H1 (cell line): ENCODE measurements at regions of chr9 and their contacts with region 1.

Region 1: GRCh38 chr9:92964998-92965758 is 17.9 kb downstream of the FGD3 start:
- DNase-seq: no peak
- H3K4me3 ChIP-seq: no peak overlapping the region
- H3K27ac ChIP-seq: no peak overlapping the region
- H3K4me1 ChIP-seq: peaks cover 5 to 25% (median 15%) of the 10 kb centered on the region in 4 experiments
- H3K27me3 ChIP-seq: no peaks in the 10 kb centered on the region
- CTCF ChIP-seq: no peak
- EP300 ChIP-seq: no peak
- POLR2A ChIP-seq: no peak
- RAD21 ChIP-seq: no peak

Region 2: GRCh38 chr9:92934321-92934720 is 30.9 kb before region 1 on chr9:
- CTCF ChIA-PET with region 1: no interaction called
- POLR2A ChIA-PET with region 1: no interaction called
- DNase-seq: no peak
- H3K4me3 ChIP-seq: no peak overlapping the region
- H3K27ac ChIP-seq: no peak overlapping the region
- H3K4me1 ChIP-seq: no peaks in the 10 kb centered on the region
- H3K27me3 ChIP-seq: no peaks in the 10 kb centered on the region
- CTCF ChIP-seq: no peak
- EP300 ChIP-seq: no peak
- POLR2A ChIP-seq: no peak
- RAD21 ChIP-seq: no peak

Region 3: GRCh38 chr9:92954049-92954861 is 10.9 kb before region 1 on chr9:
- CTCF ChIA-PET with region 1: interaction called, 11 read pairs
- POLR2A ChIA-PET with region 1: interaction called, 4 read pairs
- DNase-seq: no peak
- H3K4me3 ChIP-seq: no peak overlapping the region
- H3K27ac ChIP-seq: no peak overlapping the region
- H3K4me1 ChIP-seq: no peaks in the 10 kb centered on the region
- H3K27me3 ChIP-seq: no peaks in the 10 kb centered on the region
- CTCF ChIP-seq: no peak
- EP300 ChIP-seq: no peak
- POLR2A ChIP-seq: no peak
- RAD21 ChIP-seq: no peak